Activated CD4-positive, alpha-beta T cell treated with anti-CD3 and anti-CD28 coated beads, Interleukin-2, amount 10 ng/mL, durations not matched to agents 24 days and 14 days (primary cell): ENCODE measurements at regions of chr4 and their contacts with region 1.

Region 1: GRCh38 chr4:10655986-10656385 is 28.6 kb downstream of the CLNK start:
- DNase-seq: no peak
- H3K4me3 Mint-ChIP-seq: peak overlapping the region; percentile 55
- H3K27ac Mint-ChIP-seq: peak overlapping the region; percentile 80
- H3K4me1 Mint-ChIP-seq: peaks cover 32% of the 10 kb centered on the region
- H3K27me3 Mint-ChIP-seq: peaks cover 1% of the 10 kb centered on the region

Region 2: GRCh38 chr4:10106421-10107039 is 549.5 kb before region 1 on chr4:
- intact Hi-C with region 1: loop called (anchors 10 kb)
- DNase-seq: peak; percentile 80
- H3K4me3 Mint-ChIP-seq: peak overlapping the region; percentile 74
- H3K27ac Mint-ChIP-seq: peak overlapping the region; percentile 89
- H3K4me1 Mint-ChIP-seq: peaks cover 92% of the 10 kb centered on the region
- H3K27me3 Mint-ChIP-seq: no peaks in the 10 kb centered on the region

Region 3: DNA sequence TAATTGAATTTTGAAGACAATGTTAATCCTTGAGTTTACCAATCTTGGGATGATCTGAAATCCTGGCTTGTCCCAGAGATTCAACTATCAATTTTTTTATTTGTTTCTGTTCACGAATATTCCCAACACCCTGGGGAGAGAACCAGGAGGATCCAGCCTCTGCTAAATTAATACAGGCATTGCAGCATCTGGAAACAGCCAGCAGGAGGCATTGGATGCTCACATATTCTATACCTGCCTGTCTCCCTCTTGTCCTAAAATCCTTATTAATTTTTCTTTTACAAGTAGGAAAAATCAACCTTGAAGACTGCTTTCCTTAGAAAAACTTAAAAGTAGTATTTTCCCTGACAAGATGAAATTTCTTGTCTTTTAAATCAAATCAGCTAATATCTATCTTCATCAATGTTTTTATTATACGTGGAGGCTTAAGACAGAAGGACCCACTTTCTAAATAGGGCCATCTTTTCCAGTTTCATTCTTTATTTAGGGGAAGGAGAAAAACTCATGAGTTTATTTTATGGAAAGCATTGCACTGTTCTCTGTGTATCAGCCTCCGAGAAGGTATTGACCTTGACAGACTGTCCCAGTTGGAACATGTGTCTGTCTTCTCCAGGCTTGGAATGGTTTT is 73.8 kb before region 1 on chr4:
- intact Hi-C with region 1: loop called (anchors 5 kb)
- DNase-seq: peak; percentile 69
- H3K4me3 Mint-ChIP-seq: no peak overlapping the region
- H3K27ac Mint-ChIP-seq: no peak overlapping the region
- H3K4me1 Mint-ChIP-seq: peaks cover 14% of the 10 kb centered on the region
- H3K27me3 Mint-ChIP-seq: no peaks in the 10 kb centered on the region

Region 4: DNA sequence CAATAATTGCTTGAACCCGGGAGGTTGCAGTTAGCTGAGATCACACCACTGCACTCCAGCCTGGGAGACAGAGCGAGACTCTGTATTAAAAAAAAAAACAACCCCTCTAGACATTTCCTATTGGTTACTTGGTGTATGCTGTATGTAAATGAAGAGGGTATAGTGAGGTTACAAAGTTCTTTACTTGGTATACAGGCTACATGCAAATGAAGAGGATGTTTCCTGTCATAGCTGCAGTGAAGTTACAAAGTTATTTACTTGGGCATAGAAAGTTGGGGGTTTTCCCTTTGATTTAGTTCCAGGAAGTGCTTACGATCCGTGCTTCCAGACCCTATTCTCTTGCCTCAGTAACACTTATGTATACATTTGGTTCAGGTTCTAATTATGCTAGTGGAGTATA is 67.0 kb after region 1 on chr4:
- intact Hi-C with region 1: loop called (anchors 2 kb)
- DNase-seq: peak; percentile 69
- H3K4me3 Mint-ChIP-seq: peak overlapping the region; percentile 65
- H3K27ac Mint-ChIP-seq: peak overlapping the region; percentile 88
- H3K4me1 Mint-ChIP-seq: peaks cover 46% of the 10 kb centered on the region
- H3K27me3 Mint-ChIP-seq: no peaks in the 10 kb centered on the region

Region 5: DNA sequence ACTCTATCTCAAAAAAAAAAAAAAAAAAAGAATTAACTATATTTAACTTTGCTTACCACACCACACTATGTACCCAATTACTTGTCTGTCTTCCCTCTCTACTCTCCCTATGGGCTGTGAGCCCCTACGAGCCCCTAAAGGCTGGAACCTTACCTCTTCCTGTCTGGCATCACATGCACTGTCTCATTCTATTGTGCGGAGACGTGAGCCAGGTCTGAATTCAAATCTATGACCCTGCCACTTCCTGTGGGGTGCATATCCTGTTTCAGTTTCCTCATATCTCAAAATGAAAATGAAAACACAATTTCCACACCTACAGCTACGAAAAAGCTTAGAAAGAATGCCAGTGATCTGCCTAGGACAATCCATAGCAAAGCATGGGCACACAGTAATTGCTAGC is 815.6 kb after region 1 on chr4:
- intact Hi-C with region 1: loop called (anchors 10 kb)
- DNase-seq: peak; percentile 87
- H3K4me3 Mint-ChIP-seq: peak overlapping the region; percentile 68
- H3K27ac Mint-ChIP-seq: peak overlapping the region; percentile 92
- H3K4me1 Mint-ChIP-seq: peaks cover 36% of the 10 kb centered on the region
- H3K27me3 Mint-ChIP-seq: peaks cover 2% of the 10 kb centered on the region